ENCODE measurements at regions of chr22 and their contacts with region 1.

Region 1: DNA sequence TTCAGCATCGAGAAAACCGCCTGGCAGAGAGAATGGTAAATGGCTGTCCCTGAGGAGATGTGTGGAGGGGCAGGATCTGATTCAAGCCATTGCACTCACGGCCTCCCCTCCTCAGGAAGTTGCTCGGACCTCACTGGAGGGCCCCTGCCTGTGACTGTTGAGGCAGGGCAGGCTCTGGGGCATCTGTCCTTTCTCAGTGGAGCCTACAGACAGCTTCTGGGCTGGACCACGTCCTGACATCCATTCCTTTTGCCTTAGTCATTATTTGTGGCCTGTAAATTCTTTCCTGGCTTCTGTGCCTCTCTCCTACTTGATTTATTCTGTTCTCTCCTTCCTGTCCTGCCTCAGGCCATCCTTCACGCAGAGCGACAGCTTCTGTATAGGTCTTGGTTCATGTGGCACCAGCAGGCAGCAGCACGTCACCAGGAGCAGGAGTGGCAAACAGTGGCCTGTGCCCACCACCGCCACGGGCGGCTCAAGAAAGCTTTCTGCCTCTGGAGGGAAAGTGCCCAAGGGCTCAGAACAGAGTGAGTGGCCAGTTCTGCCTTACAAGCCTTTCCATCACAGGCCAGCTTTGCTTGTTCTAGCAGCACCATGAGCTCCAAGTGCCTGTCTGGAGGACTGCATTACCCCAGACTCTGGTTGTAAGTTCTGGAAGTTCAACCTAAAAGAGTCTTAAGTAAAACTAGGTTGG is 59.6 kb downstream of the PISD start:
- DNase-seq: peak; percentile 73 to 90
- H3K4me3 ChIP-seq: no peak overlapping the region
- H3K27ac ChIP-seq: peak overlapping the region; percentile 30
- H3K4me1 ChIP-seq: peaks cover 19% of the 10 kb centered on the region
- H3K27me3 ChIP-seq: no peaks in the 10 kb centered on the region
- CTCF ChIP-seq: no peak

Region 2: GRCh38 chr22:31586137-31586920 is 16.1 kb before region 1 on chr22:
- CTCF ChIA-PET with region 1: no interaction called
- POLR2A ChIA-PET with region 1: no interaction called
- intact Hi-C with region 1: loop called (anchors 1 kb)
- DNase-seq: peak; percentile 47 to 94
- H3K4me3 ChIP-seq: no peak overlapping the region
- H3K27ac ChIP-seq: peak overlapping the region; percentile 82
- H3K4me1 ChIP-seq: peaks cover 60% of the 10 kb centered on the region
- H3K27me3 ChIP-seq: no peaks in the 10 kb centered on the region
- CTCF ChIP-seq: no peak

Region 3: GRCh38 chr22:31630331-31631329 is 28.2 kb after region 1 on chr22:
- CTCF ChIA-PET with region 1: no interaction called
- POLR2A ChIA-PET with region 1: no interaction called
- intact Hi-C with region 1: no loop called
- DNase-seq: peak; percentile 78 to 95
- H3K4me3 ChIP-seq: peak overlapping the region; percentile 84
- H3K27ac ChIP-seq: peak overlapping the region; percentile 51
- H3K4me1 ChIP-seq: peaks cover 39% of the 10 kb centered on the region
- H3K27me3 ChIP-seq: no peaks in the 10 kb centered on the region
- CTCF ChIP-seq: no peak; the same call in 1 of the 2 replicates